PC-9 (cell line): ENCODE measurements at regions of chr10 and their contacts with region 1.

Region 1: DNA sequence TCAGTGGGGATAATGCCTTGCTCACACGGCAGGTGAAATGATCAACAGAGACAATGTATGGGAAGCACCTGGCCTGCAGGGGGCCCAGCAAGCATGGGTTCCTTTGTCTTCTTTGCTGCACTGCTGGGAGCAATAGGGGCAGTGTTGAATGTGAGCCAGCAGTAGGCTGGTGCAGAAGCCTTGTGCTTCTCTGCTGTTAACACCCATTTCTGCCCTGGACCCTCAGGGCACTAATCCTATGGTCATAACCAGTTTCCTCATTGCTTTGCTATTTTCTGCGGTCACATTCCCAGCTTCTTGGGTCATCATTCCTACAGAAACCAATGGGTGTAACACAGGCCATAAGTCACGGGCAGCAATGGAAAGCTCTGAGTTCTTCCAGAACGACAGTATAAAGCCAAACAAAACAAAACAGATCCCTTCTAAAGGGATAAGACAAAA is 10.9 kb upstream of the LGI1 start:
- DNase-seq: peak; percentile 85 to 96
- H3K4me3 ChIP-seq: 0 out of 2 replicates have a peak overlapping the region, but pooled peaks have one; percentile 28
- H3K27ac ChIP-seq: peak overlapping the region; percentile 81
- H3K4me1 ChIP-seq: peaks cover 46% of the 10 kb centered on the region
- H3K27me3 ChIP-seq: no peaks in the 10 kb centered on the region
- CTCF ChIP-seq: peak; percentile 73

Region 2: GRCh38 chr10:93406364-93407145 is 340.3 kb before region 1 on chr10:
- CTCF ChIA-PET with region 1: no interaction called
- POLR2A ChIA-PET with region 1: interaction called, 10 read pairs
- intact Hi-C with region 1: no loop called
- DNase-seq: no peak
- H3K4me3 ChIP-seq: no peak overlapping the region
- H3K27ac ChIP-seq: no peak overlapping the region
- H3K4me1 ChIP-seq: 0 out of 2 replicates have a peak, but pooled peaks cover 8% of the 10 kb centered on the region
- H3K27me3 ChIP-seq: no peaks in the 10 kb centered on the region
- CTCF ChIP-seq: no peak

Region 3: GRCh38 chr10:93503075-93503474 is 243.8 kb before region 1 on chr10:
- CTCF ChIA-PET with region 1: no interaction called
- POLR2A ChIA-PET with region 1: interaction called, 11 read pairs
- intact Hi-C with region 1: no loop called
- DNase-seq: no peak
- H3K4me3 ChIP-seq: no peak overlapping the region
- H3K27ac ChIP-seq: no peak overlapping the region
- H3K4me1 ChIP-seq: no peaks in the 10 kb centered on the region
- H3K27me3 ChIP-seq: no peaks in the 10 kb centered on the region
- CTCF ChIP-seq: no peak

Region 4: GRCh38 chr10:93680412-93681047 is 66.3 kb before region 1 on chr10:
- CTCF ChIA-PET with region 1: no interaction called
- POLR2A ChIA-PET with region 1: no interaction called
- intact Hi-C with region 1: no loop called
- DNase-seq: no peak
- H3K4me3 ChIP-seq: no peak overlapping the region
- H3K27ac ChIP-seq: no peak overlapping the region
- H3K4me1 ChIP-seq: no peaks in the 10 kb centered on the region
- H3K27me3 ChIP-seq: no peaks in the 10 kb centered on the region
- CTCF ChIP-seq: peak; percentile 75

Region 5: DNA sequence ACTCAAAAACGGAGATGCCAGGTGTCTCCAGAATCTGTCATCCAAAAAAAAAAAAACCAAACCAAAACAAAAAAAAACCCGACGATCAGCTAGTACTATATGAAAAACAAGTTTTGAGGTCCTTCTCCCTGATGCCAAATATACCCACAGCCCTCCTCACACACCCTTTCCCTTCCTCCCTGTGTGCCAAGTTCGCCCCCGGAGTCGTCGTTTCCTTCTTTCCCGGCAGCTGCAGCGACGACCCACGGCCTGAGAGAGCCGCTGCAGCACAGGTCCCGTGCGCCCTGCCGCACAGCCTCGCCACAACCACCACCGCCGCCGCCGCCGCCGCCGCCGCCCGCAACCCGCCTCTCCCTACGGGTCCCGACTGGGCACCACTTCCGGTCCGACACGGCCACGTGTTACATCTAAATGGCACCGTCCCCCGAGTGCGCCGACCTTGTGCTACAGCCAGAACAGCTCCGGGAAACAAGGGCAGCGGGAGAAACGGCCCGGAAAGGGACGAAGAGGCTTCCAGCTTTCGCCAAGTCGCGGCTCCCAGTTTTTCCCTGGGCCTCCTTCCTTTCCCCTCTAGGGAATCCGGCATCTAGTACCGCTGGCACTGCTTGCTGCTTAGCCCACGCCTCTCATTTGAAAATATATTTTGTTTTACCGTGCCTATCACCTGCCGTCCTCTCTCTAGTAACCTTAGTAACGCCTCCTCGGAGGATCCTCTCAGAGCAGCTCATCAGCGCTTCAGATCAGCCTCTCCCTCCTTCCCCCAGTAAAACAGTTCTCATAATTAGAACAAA is 44.5 kb before region 1 on chr10 and contains the start of gene FRA10AC1:
- CTCF ChIA-PET with region 1: interaction called, 18 read pairs
- POLR2A ChIA-PET with region 1: interaction called, 3 read pairs
- intact Hi-C with region 1: loop called (anchors 5 kb)
- DNase-seq: peak; percentile 70 to 82
- H3K4me3 ChIP-seq: peak within 1 kb of the TSS; percentile 77
- H3K27ac ChIP-seq: peak within 1 kb of the TSS; percentile 84
- H3K4me1 ChIP-seq: 0 out of 2 replicates have a peak, but pooled peaks cover 10% of the 10 kb centered on the region
- H3K27me3 ChIP-seq: no peaks in the 10 kb centered on the region
- CTCF ChIP-seq: peak; percentile 59
- total RNA-seq, gene FRA10AC1: 5.4 and 10.4 TPM in 2 replicates

Region 6: DNA sequence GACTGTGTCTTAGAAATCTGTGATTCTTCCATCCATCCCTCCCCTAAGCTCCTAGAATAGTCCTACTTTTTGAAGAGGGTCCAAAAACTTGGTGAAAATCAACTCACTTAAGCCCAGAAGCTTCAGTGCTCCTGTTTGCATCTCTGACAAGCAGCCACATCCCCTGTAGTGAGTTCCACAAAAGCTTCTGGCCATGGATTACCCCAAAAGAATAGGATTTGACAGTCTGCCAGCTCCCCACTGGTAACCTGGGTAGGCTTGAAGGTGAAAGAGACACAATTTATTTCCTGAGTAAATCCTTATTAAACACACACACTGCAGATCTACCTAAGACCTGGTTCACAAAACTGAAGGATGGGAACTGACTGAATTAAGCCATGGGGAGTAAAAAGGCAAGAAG is 57.3 kb after region 1 on chr10:
- CTCF ChIA-PET with region 1: no interaction called
- POLR2A ChIA-PET with region 1: no interaction called
- intact Hi-C with region 1: no loop called
- DNase-seq: no peak
- H3K4me3 ChIP-seq: no peak overlapping the region
- H3K27ac ChIP-seq: no peak overlapping the region
- H3K4me1 ChIP-seq: no peaks in the 10 kb centered on the region
- H3K27me3 ChIP-seq: no peaks in the 10 kb centered on the region
- CTCF ChIP-seq: no peak

Region 7: GRCh38 chr10:94027196-94027595 is 280.3 kb after region 1 on chr10:
- CTCF ChIA-PET with region 1: no interaction called
- POLR2A ChIA-PET with region 1: no interaction called
- intact Hi-C with region 1: no loop called
- DNase-seq: no peak
- H3K4me3 ChIP-seq: no peak overlapping the region
- H3K27ac ChIP-seq: no peak overlapping the region
- H3K4me1 ChIP-seq: no peaks in the 10 kb centered on the region
- H3K27me3 ChIP-seq: no peaks in the 10 kb centered on the region
- CTCF ChIP-seq: no peak